Activated CD4-positive, alpha-beta T cell treated with anti-CD3 and anti-CD28 coated beads for 36 hours (primary cell): ENCODE measurements at regions of chr2 and their contacts with region 1.

Region 1: GRCh38 chr2:96336104-96336775 is 674 bp downstream of the NCAPH start:
- DNase-seq: no peak
- ATAC-seq: no peak
- H3K4me3 Mint-ChIP-seq: peak overlapping the region; percentile 88
- H3K27ac Mint-ChIP-seq: peak overlapping the region; percentile 85
- H3K4me1 Mint-ChIP-seq: peaks cover 47% of the 10 kb centered on the region
- H3K27me3 Mint-ChIP-seq: no peaks in the 10 kb centered on the region

Region 2: GRCh38 chr2:96320728-96321622 is 15.3 kb before region 1 on chr2:
- CTCF ChIA-PET with region 1: interaction called, 11 read pairs
- POLR2A ChIA-PET with region 1: interaction called, 32 read pairs
- intact Hi-C with region 1: loop called (anchors 1 kb)
- DNase-seq: peak; percentile 54
- ATAC-seq: peak; percentile 10
- H3K4me3 Mint-ChIP-seq: peak overlapping the region; percentile 73
- H3K27ac Mint-ChIP-seq: peak overlapping the region; percentile 63
- H3K4me1 Mint-ChIP-seq: peaks cover 52% of the 10 kb centered on the region
- H3K27me3 Mint-ChIP-seq: peaks cover 10% of the 10 kb centered on the region